Caco-2 (cell line): ENCODE measurements at regions of chr16 and their contacts with region 1.

Region 1: DNA sequence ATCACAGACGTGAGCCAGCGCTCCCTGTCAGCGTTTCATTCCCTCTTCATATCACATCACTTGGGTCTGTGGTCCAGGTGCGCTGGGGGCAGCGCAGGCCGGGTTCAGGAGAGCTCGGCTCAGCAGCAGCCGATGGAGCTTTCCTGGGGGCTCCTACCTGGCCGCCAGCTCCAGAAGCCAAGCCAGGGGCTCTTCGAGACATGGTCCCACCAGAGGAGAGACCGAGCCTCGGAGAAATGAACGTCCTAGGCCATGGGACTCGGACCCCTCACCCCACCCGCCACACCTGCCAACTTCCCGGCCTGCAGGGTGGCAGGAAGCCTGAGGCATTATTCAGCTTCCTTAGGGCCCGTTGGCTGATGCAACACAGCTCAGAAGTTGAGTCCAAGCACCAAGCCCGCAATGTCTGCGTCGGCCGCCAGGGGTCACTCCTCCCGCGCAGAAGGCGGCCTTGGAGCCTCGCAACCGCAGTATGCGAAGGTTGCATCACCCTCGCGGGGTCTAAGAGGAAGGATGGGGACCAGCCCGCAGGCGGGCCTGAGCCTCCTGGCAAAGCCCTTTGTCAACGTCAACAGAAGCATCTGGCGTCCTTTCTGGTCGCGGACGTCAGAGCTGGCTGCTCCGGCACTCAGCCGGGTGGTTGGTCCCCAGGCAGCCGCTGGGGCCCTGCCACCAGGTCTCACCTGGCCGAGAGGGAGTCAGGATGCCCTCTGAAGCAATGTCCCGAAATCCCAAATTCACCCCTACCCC is 13.2 kb upstream of the KLHDC4 start:
- DNase-seq: peak; percentile 92 to 94
- H3K4me3 ChIP-seq: no peak overlapping the region
- H3K4me3 Mint-ChIP-seq: peak overlapping the region; percentile 22
- H3K27ac Mint-ChIP-seq: peak overlapping the region; percentile 99
- H3K4me1 ChIP-seq: peaks cover 34% of the 10 kb centered on the region
- H3K4me1 Mint-ChIP-seq: peaks cover 21% of the 10 kb centered on the region
- H3K27me3 ChIP-seq: no peaks in the 10 kb centered on the region
- H3K27me3 Mint-ChIP-seq: no peaks in the 10 kb centered on the region
- CTCF ChIP-seq: peak; percentile 86 to 95

Region 2: DNA sequence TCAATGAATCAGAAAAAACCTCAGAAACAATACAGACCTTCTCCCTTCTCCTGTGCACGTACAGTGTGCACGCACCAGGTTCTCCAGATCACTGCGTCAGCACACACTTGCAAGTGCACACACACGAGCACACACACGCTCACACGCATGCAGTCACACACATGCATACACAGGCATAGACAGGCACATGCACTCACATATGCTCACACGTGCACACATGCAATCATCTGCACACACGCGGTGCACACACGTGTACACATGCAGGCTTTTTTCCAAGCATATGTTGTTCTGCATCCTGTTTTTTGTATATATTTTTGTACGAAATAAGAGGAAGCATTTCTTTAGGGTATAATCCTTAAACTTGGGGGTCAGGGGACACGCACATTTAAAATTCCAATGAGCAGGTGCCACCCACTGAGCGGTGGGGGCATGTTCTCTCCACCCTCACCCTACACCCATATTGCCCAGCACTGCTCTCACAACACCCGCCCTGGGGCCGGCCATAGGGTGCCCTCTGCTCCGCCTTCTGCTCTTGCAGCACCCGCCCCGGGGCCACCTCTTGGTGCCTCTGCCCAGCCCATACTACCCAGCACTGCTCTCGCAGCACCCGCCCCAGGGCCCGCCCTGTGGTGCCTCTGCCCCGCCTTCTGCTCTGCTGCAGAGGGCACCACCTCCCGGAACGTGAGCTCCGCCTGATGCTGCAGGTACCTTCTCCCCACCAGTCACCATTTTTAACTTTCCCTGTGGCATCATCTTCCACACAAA is 34.1 kb before region 1 on chr16:
- CTCF ChIA-PET with region 1: no interaction called
- POLR2A ChIA-PET with region 1: no interaction called
- intact Hi-C with region 1: no loop called
- DNase-seq: no peak
- H3K4me3 ChIP-seq: no peak overlapping the region
- H3K4me3 Mint-ChIP-seq: no peak overlapping the region
- H3K27ac Mint-ChIP-seq: no peak overlapping the region
- H3K4me1 ChIP-seq: no peaks in the 10 kb centered on the region
- H3K4me1 Mint-ChIP-seq: no peaks in the 10 kb centered on the region
- H3K27me3 ChIP-seq: no peaks in the 10 kb centered on the region
- H3K27me3 Mint-ChIP-seq: no peaks in the 10 kb centered on the region
- CTCF ChIP-seq: no peak

Region 3: DNA sequence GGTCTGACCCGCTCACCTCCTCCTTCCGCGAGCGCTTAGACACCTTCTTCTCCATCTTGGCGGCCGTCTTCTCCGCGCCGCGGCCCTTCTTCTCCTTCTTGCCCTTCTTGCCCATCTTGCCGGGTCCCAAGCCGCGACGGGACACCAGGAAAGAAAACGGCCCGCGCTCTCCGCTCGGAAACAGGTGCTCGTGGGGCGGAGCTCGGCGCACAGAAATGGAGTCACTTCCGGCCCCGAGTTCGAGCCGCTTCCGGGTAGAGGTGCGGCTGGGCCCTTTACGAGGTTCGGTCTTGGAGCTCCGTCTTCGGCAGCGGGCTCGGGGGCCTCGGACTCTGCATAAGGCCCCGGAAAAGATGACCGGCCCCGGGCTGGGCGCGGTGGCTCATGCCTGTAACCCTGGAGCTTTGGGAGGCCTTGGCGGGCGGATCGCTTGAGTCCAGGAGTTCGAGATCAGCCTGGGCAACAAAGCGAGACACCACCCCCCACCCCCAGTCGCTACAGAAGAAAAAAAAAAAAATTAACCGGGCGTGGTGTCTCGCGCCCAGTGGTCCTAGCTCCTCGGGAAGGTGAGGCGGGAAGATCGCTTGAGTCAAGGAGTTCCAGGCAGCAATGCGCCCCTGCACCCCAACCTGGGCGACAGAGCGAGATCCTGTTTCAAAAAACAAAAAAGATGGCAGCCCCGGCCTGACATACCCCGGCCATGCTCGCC is 13.1 kb before region 1 on chr16 and contains the start of gene KLHDC4:
- CTCF ChIA-PET with region 1: interaction called, 20 read pairs
- POLR2A ChIA-PET with region 1: interaction called, 7 read pairs
- intact Hi-C with region 1: no loop called
- DNase-seq: peak; percentile 93 to 94
- H3K4me3 ChIP-seq: peak within 1 kb of the TSS; percentile 74
- H3K4me3 Mint-ChIP-seq: peak within 1 kb of the TSS; percentile 99
- H3K27ac Mint-ChIP-seq: peak within 1 kb of the TSS; percentile 99
- H3K4me1 ChIP-seq: 0 out of 2 replicates have a peak, but pooled peaks cover 5% of the 10 kb centered on the region
- H3K4me1 Mint-ChIP-seq: peaks cover 9% of the 10 kb centered on the region
- H3K27me3 ChIP-seq: no peaks in the 10 kb centered on the region
- H3K27me3 Mint-ChIP-seq: no peaks in the 10 kb centered on the region
- CTCF ChIP-seq: no peak
- total RNA-seq, gene KLHDC4: 116 and 117 TPM in 2 replicates

Region 4: DNA sequence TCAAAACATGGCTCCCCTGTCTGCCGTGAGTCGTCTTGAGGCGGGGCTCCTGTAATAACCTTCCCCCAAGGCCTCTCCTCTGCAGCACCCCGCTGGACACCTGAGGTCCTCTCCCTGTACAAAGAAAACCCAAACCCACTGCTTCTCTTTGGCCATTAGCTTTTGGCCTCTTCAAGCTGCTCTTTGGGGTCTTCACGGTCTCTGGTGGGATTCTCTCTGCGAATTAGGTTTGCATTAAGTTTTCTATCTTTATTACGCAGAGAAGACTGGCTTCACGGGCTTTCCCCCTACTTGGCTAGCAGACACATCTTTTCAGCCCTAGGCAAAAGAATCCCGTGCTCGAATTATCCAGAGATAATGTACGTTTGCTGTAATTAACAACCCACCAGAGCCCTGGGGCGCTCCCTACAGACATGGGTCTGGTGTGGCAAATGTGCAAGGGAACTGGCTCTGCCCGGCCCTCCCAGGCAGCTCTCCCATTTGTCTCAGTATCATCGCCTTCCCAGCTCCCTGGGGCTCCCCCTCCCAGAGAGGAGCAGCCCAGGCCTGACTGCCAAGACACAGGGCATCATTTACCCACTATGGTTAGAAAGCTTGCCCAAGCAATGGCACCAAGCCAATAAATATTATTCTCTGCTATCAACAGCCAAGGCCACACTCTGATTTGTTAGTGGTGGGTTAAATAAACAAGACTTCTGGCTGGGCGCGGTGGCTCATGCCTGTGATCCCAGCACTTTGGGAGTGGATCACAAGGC is 11.4 kb after region 1 on chr16:
- CTCF ChIA-PET with region 1: interaction called, 7 read pairs
- POLR2A ChIA-PET with region 1: interaction called, 12 read pairs
- intact Hi-C with region 1: loop called (anchors 1 kb)
- DNase-seq: no peak
- H3K4me3 ChIP-seq: no peak overlapping the region
- H3K4me3 Mint-ChIP-seq: no peak overlapping the region
- H3K27ac Mint-ChIP-seq: peak overlapping the region; percentile 91
- H3K4me1 ChIP-seq: peaks cover 52% of the 10 kb centered on the region
- H3K4me1 Mint-ChIP-seq: peaks cover 54% of the 10 kb centered on the region
- H3K27me3 ChIP-seq: no peaks in the 10 kb centered on the region
- H3K27me3 Mint-ChIP-seq: no peaks in the 10 kb centered on the region
- CTCF ChIP-seq: no peak

Region 5: DNA sequence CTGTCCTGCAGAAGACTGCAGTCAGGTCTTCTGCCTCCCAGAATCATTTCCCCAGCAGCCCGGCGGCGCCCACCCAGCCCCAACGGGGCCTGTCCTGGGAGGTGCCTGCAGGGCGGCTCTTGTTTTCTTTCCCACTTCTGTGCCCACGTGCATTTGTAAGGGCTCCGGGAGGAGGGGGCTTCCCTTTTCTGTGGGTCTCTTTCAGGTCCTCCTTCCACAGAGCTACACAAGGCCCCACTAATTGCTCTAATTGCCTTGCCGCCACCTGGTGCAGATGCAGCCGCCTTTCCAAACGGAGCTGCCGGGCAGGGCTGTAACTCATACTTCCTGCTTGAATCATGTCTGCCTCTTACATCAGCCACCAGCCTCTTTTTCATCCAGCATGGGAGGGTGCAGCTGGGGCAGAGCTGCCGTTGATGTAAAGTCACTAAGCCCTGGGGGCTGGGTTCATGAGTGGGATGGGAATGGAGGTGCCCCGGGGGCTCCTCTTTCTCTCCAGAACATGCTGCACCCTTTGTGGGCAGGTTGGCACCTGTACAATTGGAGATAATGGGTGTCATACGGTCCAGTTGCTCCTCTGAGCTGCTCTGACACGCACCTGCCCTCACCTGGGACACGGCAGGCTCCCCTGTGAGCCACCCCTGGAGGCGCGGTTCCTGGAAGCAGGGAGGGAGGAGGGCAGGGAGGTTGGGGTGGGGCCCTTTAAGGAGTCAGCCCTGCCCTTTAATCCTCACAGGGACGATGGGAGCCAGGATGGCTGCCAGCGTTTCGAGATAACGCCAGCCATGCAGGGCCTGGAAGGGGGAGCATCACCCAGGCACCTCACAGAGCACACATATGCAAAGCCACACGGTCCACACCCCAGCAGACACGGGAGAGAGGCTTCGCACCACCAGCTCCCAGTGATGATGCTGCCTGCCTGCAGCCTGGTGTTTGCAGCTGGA is 27.9 kb after region 1 on chr16:
- CTCF ChIA-PET with region 1: interaction called, 10 read pairs
- POLR2A ChIA-PET with region 1: interaction called, 4 read pairs
- intact Hi-C with region 1: no loop called
- DNase-seq: peak; percentile 78 to 85
- H3K4me3 ChIP-seq: peak overlapping the region; percentile 16
- H3K4me3 Mint-ChIP-seq: peak overlapping the region; percentile 68
- H3K27ac Mint-ChIP-seq: peak overlapping the region; percentile 97
- H3K4me1 ChIP-seq: peaks cover 18% of the 10 kb centered on the region
- H3K4me1 Mint-ChIP-seq: peaks cover 18% of the 10 kb centered on the region
- H3K27me3 ChIP-seq: no peaks in the 10 kb centered on the region
- H3K27me3 Mint-ChIP-seq: no peaks in the 10 kb centered on the region
- CTCF ChIP-seq: no peak

Region 6: DNA sequence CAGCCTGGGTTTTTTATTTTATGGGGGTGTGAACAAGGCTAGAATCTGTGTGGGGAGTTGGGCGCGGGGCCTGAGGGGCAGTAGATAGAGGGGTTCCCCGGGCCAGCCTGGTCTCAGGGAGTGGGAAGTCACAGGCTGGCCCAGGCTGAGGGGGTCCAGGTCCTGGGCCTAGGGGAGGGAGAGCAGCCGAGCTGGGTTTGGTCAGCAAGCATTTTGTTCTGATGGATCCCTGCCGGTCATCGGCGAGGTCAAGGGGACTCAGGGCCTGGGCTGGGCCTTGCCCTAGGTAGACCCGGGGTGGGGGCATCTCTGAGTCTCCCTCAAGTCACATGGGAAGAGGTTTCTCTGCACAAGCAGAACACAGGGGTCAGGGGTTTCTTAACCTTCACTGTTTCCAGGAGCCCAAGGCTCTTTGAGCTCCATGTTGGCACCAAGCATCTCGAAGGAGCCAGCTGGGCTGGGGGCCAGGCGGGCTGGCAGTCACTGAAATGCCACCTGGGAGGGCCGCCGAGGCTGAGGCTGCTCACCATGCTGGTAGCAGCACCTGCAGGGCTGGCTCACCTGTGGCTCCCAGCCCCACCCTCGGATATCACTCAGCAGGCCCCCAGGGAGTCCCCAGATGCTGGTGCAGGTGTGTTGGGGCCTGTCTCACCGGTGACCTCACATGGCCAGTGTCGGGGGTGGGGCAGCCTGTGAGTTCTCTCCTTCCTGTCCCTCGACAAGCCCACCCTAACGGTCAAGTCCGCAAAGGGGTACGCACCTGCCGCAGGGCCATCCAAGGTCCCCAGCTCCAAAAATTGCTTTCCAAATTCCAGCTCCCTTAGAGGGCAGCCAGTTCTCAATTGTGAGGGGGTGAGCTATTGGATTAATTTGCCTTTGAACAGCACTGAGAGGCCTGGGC is 49.3 kb after region 1 on chr16:
- CTCF ChIA-PET with region 1: interaction called, 6 read pairs
- POLR2A ChIA-PET with region 1: interaction called, 3 read pairs
- intact Hi-C with region 1: loop called (anchors 1 kb)
- DNase-seq: peak in 1 of 2 experiments; percentile 45
- H3K4me3 ChIP-seq: no peak overlapping the region
- H3K4me3 Mint-ChIP-seq: no peak overlapping the region
- H3K27ac Mint-ChIP-seq: peak overlapping the region; percentile 79
- H3K4me1 ChIP-seq: peaks cover 40% of the 10 kb centered on the region
- H3K4me1 Mint-ChIP-seq: peaks cover 21% of the 10 kb centered on the region
- H3K27me3 ChIP-seq: no peaks in the 10 kb centered on the region
- H3K27me3 Mint-ChIP-seq: no peaks in the 10 kb centered on the region
- CTCF ChIP-seq: no peak

Region 7: DNA sequence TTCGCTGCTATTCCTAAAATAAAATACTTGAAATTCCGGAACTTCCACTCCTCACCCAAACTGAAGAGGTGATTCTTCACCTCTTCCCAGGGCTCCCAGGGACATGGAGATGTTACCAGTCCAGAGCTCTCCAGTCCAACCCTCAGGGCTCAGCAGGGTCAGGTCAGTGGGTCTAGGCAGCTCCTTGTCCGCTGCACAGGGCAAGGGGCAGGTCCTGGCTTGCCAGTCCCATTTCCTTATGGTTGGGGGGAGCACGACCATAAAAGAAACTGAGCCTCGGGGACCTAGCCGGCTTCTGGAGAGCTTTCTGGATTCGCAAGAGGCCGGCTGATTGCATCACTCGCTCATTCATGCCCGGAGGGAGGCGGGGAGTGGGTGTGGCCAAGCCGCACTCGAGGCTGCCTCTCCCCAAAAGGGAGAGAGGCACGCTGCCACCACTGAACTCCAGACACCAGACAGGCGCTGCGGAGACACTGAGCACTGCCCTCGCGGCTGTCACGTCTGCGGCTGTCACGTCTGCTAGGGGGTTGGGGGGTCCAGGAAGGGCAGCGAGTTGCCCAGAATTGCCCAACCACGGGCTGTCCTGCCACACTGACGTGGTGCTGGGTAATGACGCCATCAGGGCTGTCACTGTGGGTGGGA is 74.5 kb after region 1 on chr16:
- CTCF ChIA-PET with region 1: interaction called, 15 read pairs
- POLR2A ChIA-PET with region 1: no interaction called
- intact Hi-C with region 1: loop called (anchors 2 kb)
- DNase-seq: peak; percentile 93 to 95
- H3K4me3 ChIP-seq: peak overlapping the region; percentile 17; the same call in 1 of the 2 replicates
- H3K4me3 Mint-ChIP-seq: peak overlapping the region; percentile 64
- H3K27ac Mint-ChIP-seq: peak overlapping the region; percentile 99
- H3K4me1 ChIP-seq: peaks cover 72% of the 10 kb centered on the region
- H3K4me1 Mint-ChIP-seq: peaks cover 52% of the 10 kb centered on the region
- H3K27me3 ChIP-seq: no peaks in the 10 kb centered on the region
- H3K27me3 Mint-ChIP-seq: no peaks in the 10 kb centered on the region
- CTCF ChIP-seq: no peak

Region 8: DNA sequence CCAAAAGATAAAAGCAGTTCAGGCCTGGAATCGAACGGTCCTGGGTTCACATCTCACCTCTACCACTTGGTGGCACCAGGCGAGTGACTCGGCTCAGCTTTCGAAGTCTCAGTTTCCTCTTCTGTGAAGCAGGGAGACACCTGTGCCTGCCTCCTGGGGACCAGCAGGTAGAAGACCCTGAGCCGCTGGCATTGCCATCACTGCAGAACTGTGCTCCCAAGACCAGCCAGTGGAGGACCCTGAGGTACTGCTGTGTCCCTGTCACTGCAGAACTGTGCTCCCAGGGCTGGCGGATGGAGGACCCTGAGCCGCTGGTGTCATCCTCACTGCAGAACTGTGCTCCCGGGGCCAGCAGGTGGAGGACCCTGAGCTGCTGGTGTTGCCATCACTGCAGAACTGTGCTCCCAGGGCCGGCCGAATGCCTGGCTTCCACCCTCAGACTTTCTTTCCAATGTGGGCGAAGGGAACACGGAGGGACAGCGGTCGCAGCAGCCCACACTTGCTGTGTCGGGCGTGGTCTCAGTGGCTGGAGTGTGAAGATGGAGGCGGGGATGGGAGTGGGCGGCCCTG is 99.0 kb after region 1 on chr16:
- CTCF ChIA-PET with region 1: interaction called, 80 read pairs
- POLR2A ChIA-PET with region 1: interaction called, 54 read pairs
- intact Hi-C with region 1: no loop called
- DNase-seq: peak in 1 of 2 experiments; percentile 18
- H3K4me3 ChIP-seq: no peak overlapping the region
- H3K4me3 Mint-ChIP-seq: no peak overlapping the region
- H3K27ac Mint-ChIP-seq: no peak overlapping the region
- H3K4me1 ChIP-seq: peaks cover 38% of the 10 kb centered on the region
- H3K4me1 Mint-ChIP-seq: peaks cover 19% of the 10 kb centered on the region
- H3K27me3 ChIP-seq: no peaks in the 10 kb centered on the region
- H3K27me3 Mint-ChIP-seq: no peaks in the 10 kb centered on the region
- CTCF ChIP-seq: no peak